Heart right ventricle (tissue), 16 donors: ENCODE measurements at regions of chr18 and their contacts with region 1.

Region 1: DNA sequence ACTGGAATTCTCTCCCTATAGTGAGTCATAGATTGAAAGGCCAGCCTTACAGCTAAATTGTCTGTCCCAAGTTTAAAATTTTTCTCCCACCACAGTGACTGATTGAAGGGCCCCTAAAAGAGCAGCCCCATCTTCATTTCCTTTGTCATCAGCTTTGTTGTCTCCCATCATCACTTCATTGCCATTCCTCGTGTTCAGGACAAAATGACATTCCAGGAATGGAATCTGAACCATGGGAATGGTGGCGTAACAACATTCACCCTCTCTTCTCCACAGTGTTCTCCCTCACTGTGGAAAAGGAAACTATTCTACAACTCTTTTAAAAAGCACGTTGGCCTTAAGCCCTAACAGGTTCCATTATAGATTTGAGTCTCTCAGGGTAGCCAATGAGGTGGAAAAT is 52.1 kb downstream of the PSTPIP2 start:
- DNase-seq: no peak
- ATAC-seq: no peak
- H3K4me3 ChIP-seq: no peak overlapping the region
- H3K27ac ChIP-seq: no peak overlapping the region
- H3K4me1 ChIP-seq: peaks cover 0 to 8% (median 0%) of the 10 kb centered on the region in 9 donors
- H3K27me3 ChIP-seq: no peaks in the 10 kb centered on the region
- CTCF ChIP-seq: no peak

Region 2: GRCh38 chr18:45974088-45974536 is 45.8 kb before region 1 on chr18:
- intact Hi-C with region 1: loop called in 1 of 10 experiments (anchors 10 kb)
- DNase-seq: peak in 1 of 2 donors; percentile 66
- ATAC-seq: peak; percentile 58 to 81 (median 70)
- H3K4me3 ChIP-seq: no peak overlapping the region
- H3K27ac ChIP-seq: peak overlapping the region in 1 of 10 donors; percentile 54
- H3K4me1 ChIP-seq: peaks cover 0 to 12% (median 0%) of the 10 kb centered on the region in 9 donors
- H3K27me3 ChIP-seq: no peaks in the 10 kb centered on the region
- CTCF ChIP-seq: peak; percentile 20 to 79 (median 71)